Dorsolateral prefrontal cortex (tissue), 120 donors: ENCODE measurements at regions of chr21 and their contacts with region 1.

Region 1: DNA sequence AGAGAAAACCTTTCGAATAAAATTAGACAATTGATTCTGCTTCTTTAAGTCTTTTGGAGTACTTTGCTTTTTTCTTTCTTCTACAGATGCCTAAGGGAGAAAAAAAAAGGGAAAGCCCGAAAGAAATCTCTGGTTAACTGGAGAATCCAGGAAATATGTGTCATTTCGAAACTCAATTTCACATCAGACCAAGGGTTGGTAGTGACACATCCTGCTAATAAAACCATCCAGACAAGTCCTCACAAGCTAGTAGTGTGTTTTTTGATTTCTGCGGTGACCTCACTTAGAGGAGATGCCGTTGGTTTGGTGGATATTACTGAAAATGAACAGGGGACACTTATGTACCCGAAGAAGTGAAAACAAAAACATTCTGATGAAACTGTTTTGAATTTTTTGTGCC is 726.5 kb upstream of the ADAMTS5 start:
- DNase-seq: no peak
- H3K4me3 ChIP-seq: no peak overlapping the region
- H3K27ac ChIP-seq: no peak overlapping the region
- H3K27me3 ChIP-seq: peaks cover 0 to 9% (median 0%) of the 10 kb centered on the region in 45 donors
- CTCF ChIP-seq: no peak

Region 2: DNA sequence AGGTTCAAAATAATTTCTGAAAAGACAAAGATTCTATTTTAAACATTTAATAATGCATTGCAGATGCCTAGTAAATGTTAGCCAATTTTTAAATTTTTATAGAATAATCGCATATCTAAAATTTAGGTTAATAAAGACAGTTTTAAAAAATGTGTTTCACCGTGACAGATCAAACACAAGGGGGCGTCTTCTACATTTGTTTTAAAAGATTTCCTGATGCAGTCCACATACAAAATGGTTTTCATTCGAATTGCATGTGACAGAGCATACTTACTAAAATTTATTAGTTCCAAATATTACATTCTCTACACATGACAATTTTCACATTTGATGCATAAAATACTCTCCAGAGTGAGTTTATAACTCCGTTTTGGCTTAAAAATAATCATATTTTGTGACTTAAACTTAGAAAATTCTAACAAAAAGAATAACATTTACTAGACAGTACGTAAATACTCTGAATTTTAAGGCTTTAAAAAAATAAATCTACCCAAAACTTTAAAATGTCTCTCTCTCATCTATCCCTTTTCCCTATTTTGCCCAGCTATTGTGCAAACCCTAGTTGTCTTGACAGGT is 923.7 kb before region 1 on chr21:
- intact Hi-C with region 1: loop called in 1 of 2 experiments (anchors 10 kb)
- DNase-seq: no peak
- H3K4me3 ChIP-seq: peak overlapping the region in 4 of 59 donors; percentile 0 to 14 (median 10)
- H3K27ac ChIP-seq: peak overlapping the region in 11 of 59 donors; percentile 6 to 74 (median 50)
- H3K27me3 ChIP-seq: no peaks in the 10 kb centered on the region
- CTCF ChIP-seq: peak; percentile 65 to 92 (median 80)

Region 3: DNA sequence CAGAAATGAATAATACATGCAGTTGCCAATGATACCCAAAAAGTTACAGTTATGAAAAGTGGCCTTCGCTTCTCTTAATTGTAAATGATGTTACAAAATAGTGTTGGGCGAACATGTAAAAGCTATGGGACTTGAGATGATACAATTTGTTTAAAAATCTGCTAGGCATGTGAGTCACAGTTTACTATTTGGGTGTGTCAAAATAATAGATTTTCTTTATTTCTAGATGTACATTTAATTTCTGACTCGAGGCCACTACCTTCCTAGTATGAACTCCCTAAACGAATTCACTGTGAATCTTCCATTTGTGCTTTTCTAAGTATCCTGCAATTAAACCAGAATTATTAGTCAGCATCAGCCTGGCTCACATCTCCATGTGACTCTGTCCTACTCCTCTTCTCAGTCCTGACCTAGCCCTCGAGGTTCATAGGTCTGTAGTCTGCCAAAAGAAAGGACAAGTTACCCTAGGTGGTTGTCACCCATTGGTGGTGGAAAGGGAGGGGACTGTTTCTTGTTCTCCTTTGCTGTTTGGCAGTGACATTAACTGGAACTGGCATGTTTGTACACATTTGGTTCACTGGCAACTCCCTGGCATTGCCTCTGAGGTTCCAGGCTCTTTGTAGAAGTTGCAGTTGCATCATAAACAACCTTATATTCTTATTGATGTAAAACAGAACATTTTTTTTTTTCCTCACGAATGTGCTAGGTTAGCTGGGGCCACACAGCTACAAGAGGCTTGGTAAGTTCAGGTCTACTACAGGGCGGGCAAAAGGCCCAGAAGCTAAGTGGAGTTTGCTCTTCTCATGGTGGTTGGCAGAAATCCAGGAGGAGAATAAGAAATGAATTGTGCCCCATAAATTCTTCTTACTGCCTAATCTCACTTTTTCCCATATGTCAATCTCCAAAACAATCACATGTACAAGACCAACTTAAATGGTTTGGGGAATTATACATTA is 20.1 kb after region 1 on chr21:
- intact Hi-C with region 1: no loop called
- DNase-seq: no peak
- H3K4me3 ChIP-seq: no peak overlapping the region
- H3K27ac ChIP-seq: no peak overlapping the region
- H3K27me3 ChIP-seq: no peaks in the 10 kb centered on the region
- CTCF ChIP-seq: no peak